Ascending aorta (tissue), 2 donors: ENCODE measurements at regions of chr19 and their contacts with region 1.

Region 1: GRCh38 chr19:48363810-48364563 is at the starts of genes SYNGR4 and TMEM143:
- DNase-seq: peak; percentile 99
- H3K4me3 ChIP-seq: peak within 1 kb of the TSS; percentile 61 to 65
- H3K27ac ChIP-seq: peak within 1 kb of the TSS; percentile 72 to 81
- H3K4me1 ChIP-seq: peaks cover 0 to 4% of the 10 kb centered on the region in 2 donors
- H3K27me3 ChIP-seq: no peaks in the 10 kb centered on the region
- CTCF ChIP-seq: no peak
- total RNA-seq, gene SYNGR4: not detected
- total RNA-seq, gene TMEM143: 25.3 TPM

Region 2: DNA sequence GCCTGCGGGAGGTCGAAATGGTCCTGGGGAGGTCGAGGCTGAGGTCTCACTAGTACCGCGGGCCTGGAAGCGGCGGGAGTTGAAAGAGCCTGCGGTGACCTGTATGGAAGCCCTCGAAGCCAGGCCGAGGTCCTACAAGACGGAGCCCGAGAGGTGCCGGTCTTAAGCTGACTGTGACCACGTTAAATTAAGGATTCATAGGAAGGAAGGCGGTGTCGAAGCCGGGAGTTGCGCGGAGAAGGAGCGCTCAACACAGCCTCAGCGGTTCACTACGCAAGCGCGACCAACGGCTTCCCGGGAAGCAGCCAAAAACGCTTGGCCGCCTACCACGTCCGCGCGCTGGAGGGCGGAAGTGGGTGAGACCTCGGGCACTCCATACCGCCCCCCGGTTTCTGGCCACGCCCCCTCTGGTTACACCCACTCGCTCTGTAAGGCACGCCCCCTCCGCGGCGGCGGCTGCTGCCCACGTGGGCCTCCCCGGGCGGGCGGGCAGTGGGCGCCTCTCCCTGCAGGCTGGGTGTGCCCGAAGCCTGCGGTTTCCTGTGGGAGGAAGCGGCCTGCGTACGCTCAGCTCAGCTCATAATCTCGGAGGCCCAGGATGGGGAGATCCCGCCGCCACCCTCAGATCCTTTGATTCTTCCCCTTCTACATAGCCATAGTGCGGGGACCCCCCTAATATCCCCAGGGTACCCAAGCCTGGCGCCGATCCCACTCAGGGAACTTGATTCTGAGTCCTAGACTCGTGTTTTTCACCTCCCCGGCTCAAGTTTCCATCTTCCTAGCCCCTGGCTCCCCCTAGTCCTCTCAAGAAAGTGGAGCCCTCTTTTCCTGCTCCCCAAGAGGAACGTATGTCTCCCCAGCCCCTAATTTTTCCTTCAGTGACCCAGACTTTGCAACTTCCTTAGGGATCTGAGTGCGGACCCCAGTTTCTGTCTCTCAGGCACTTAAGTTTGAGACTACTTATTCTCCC is 42.1 kb before region 1 on chr19:
- intact Hi-C with region 1: loop called (anchors 1 kb)
- DNase-seq: peak; percentile 94 to 99
- H3K4me3 ChIP-seq: peak overlapping the region; percentile 55 to 79
- H3K27ac ChIP-seq: peak overlapping the region; percentile 97 to 99
- H3K4me1 ChIP-seq: peaks cover 0 to 31% of the 10 kb centered on the region in 2 donors
- H3K27me3 ChIP-seq: no peaks in the 10 kb centered on the region
- CTCF ChIP-seq: no peak

Region 3: GRCh38 chr19:48333467-48334384 is 30.3 kb before region 1 on chr19:
- intact Hi-C with region 1: loop called (anchors 1 kb)
- DNase-seq: peak; percentile 68 to 93
- H3K4me3 ChIP-seq: peak overlapping the region; percentile 29 to 66
- H3K27ac ChIP-seq: peak overlapping the region; percentile 79 to 89
- H3K4me1 ChIP-seq: peaks cover 0 to 11% of the 10 kb centered on the region in 2 donors
- H3K27me3 ChIP-seq: no peaks in the 10 kb centered on the region
- CTCF ChIP-seq: peak; percentile 84 to 93 (median 92)

Region 4: GRCh38 chr19:48391107-48391986 is 27.4 kb after region 1 on chr19 and contains the start of gene KDELR1:
- intact Hi-C with region 1: loop called (anchors 2 kb)
- DNase-seq: peak in 1 of 2 donors; percentile 80
- H3K4me3 ChIP-seq: peak within 1 kb of the TSS; percentile 85 to 94
- H3K27ac ChIP-seq: peak within 1 kb of the TSS; percentile 91 to 94
- H3K4me1 ChIP-seq: peaks cover 0 to 14% of the 10 kb centered on the region in 2 donors
- H3K27me3 ChIP-seq: peaks cover 28% of the 10 kb centered on the region
- CTCF ChIP-seq: peak; percentile 82 to 94 (median 90)
- total RNA-seq, gene KDELR1: 183 TPM

Region 5: GRCh38 chr19:48445606-48446481 is 81.9 kb after region 1 on chr19 and contains the start of gene GRWD1:
- intact Hi-C with region 1: loop called (anchors 1 kb)
- DNase-seq: peak; percentile 72 to 96
- H3K4me3 ChIP-seq: peak within 1 kb of the TSS; percentile 76 to 81
- H3K27ac ChIP-seq: peak within 1 kb of the TSS; percentile 87 to 89
- H3K4me1 ChIP-seq: peaks cover 3 to 15% of the 10 kb centered on the region in 2 donors
- H3K27me3 ChIP-seq: peaks cover 7% of the 10 kb centered on the region
- CTCF ChIP-seq: no peak
- total RNA-seq, gene GRWD1: 16.0 TPM

Region 6: GRCh38 chr19:48492925-48493717 is 129.1 kb after region 1 on chr19:
- intact Hi-C with region 1: loop called (anchors 5 kb)
- DNase-seq: peak; percentile 89 to 95
- H3K4me3 ChIP-seq: peak overlapping the region; percentile 58 to 72
- H3K27ac ChIP-seq: peak overlapping the region; percentile 37 to 61
- H3K4me1 ChIP-seq: peaks cover 0 to 10% of the 10 kb centered on the region in 2 donors
- H3K27me3 ChIP-seq: peaks cover under 1% of the 10 kb centered on the region
- CTCF ChIP-seq: no peak

Region 7: GRCh38 chr19:48713864-48714758 is 350.1 kb after region 1 on chr19:
- intact Hi-C with region 1: loop called (anchors 10 kb)
- DNase-seq: peak; percentile 97 to 99
- H3K4me3 ChIP-seq: peak overlapping the region; percentile 64 to 75
- H3K27ac ChIP-seq: peak overlapping the region; percentile 69 to 79
- H3K4me1 ChIP-seq: peaks cover 12 to 18% of the 10 kb centered on the region in 2 donors
- H3K27me3 ChIP-seq: no peaks in the 10 kb centered on the region
- CTCF ChIP-seq: no peak